ENCODE measurements at regions of chr2 and their contacts with region 1.

Region 1: GRCh38 chr2:128321784-128322714 is 3.4 kb upstream of the HS6ST1 start:
- DNase-seq: peak; percentile 75 to 80 (median 78)
- H3K4me3 ChIP-seq: peak overlapping the region; percentile 42 to 72 (median 51)
- H3K4me3 Mint-ChIP-seq: peak overlapping the region; percentile 77 to 78
- H3K27ac ChIP-seq: peak overlapping the region in 1 of 2 donors; percentile 83
- H3K27ac Mint-ChIP-seq: peak overlapping the region in 6 of 7 donors; percentile 51 to 86 (median 74)
- H3K4me1 ChIP-seq: peaks cover 22 to 28% of the 10 kb centered on the region in 2 donors
- H3K4me1 Mint-ChIP-seq: peaks cover 19% of the 10 kb centered on the region
- H3K27me3 ChIP-seq: peaks cover 0 to 16% of the 10 kb centered on the region in 2 donors
- H3K27me3 Mint-ChIP-seq: peaks cover 8 to 42% (median 12%) of the 10 kb centered on the region in 3 donors
- CTCF ChIP-seq: peak; percentile 95

Region 2: DNA sequence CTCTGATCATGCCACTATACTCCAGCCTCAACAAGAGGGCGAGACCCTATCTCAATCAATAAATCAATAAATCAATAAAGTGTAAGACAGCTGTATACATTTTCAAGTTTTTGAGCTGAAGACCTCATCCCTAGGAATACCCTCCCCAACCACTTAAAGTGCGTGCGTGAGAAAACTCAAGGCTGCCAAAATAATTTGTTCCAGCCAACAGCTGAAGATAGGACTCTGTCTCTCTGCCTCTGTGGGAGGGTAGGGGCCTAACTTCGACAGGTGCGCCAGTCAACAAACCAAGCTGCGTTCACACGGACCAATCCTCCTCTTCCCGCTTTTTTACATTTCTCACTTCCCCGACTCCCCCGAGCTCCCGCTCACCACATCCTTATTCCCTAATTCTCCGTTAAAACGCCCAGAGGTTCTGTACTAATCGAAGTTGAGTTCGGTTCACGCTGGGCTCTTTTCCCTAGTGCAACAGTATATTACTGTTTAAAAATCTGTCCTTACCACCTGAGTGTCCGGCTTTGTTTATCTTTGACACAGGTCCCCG is 464.7 kb before region 1 on chr2:
- intact Hi-C with region 1: no loop called
- DNase-seq: peak in 1 of 3 donors; percentile 11
- H3K4me3 ChIP-seq: peak overlapping the region; percentile 79 to 85 (median 83)
- H3K4me3 Mint-ChIP-seq: peak overlapping the region; percentile 82 to 95
- H3K27ac ChIP-seq: peak overlapping the region; percentile 34 to 87
- H3K27ac Mint-ChIP-seq: peak overlapping the region; percentile 84 to 92 (median 88)
- H3K4me1 ChIP-seq: peaks cover 18 to 32% of the 10 kb centered on the region in 2 donors
- H3K4me1 Mint-ChIP-seq: peaks cover 37% of the 10 kb centered on the region
- H3K27me3 ChIP-seq: no peaks in the 10 kb centered on the region
- H3K27me3 Mint-ChIP-seq: peaks cover 3 to 5% (median 4%) of the 10 kb centered on the region in 3 donors
- CTCF ChIP-seq: no peak

Region 3: DNA sequence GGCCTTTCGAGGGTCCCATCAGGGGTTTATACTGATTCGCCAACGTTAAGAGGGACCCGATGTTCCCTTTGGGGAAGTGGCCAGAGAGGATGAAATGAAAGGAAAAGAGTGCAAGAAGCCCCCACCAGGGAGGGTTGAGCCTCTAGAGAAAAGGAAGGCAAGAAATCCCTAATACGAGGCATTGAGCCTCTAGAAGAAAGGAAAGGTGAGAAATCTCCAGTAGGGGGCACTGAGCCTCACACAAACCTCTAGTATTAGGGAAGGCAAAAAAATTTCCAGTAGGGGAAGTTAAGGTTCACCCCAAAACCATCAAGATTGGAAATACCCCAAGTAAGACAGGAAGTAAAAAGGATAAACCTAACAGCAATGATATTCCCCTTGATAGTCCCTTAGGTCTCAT is 284.4 kb before region 1 on chr2:
- intact Hi-C with region 1: no loop called
- DNase-seq: peak in 1 of 3 donors; percentile 17
- H3K4me3 ChIP-seq: peak overlapping the region in 1 of 3 experiments; percentile 12
- H3K4me3 Mint-ChIP-seq: no peak overlapping the region
- H3K27ac ChIP-seq: no peak overlapping the region
- H3K27ac Mint-ChIP-seq: no peak overlapping the region
- H3K4me1 ChIP-seq: no peaks in the 10 kb centered on the region
- H3K4me1 Mint-ChIP-seq: no peaks in the 10 kb centered on the region
- H3K27me3 ChIP-seq: no peaks in the 10 kb centered on the region
- H3K27me3 Mint-ChIP-seq: peaks cover 3 to 5% (median 4%) of the 10 kb centered on the region in 3 donors
- CTCF ChIP-seq: no peak

Region 4: DNA sequence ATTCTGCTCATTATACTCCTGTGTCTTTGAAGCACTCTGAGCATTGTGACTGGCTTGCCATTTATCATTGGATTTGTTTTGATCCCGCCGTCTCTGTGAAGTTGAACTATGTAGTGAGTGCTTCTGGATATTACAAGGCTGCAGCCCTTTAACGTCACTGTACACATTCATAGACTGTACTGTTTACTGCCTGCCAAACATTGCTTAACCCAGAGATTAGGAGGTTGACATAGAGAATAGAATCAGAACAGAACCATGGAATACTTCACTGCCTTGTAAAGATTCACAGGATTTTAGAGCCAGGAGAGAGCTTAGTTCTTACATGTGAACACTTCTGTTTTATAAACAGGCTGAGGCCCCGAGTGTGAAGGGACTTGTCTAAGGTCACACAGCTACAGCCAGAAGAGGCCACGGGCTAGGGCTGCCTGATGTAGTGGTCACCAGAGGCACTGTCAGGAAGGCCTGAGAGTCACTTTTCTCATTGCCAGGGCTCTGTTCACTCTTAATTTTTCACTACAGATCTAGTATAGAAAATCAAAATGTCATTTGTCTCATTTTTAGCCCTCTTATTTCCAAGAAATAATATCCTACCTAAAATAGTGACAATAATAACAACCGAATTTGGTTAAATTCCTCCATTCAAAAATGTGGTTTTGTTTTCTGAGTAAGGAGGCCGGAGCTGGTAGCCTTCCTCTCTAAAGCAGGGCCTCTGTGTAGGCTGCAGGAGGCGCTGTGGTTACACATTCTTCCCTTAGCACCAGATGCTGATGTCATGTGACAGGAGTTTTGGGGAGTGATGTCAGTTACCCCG is 143.2 kb before region 1 on chr2:
- intact Hi-C with region 1: loop called in 1 of 2 experiments (anchors 10 kb)
- DNase-seq: peak; percentile 63 to 80 (median 76)
- H3K4me3 ChIP-seq: no peak overlapping the region
- H3K4me3 Mint-ChIP-seq: no peak overlapping the region
- H3K27ac ChIP-seq: peak overlapping the region; percentile 18 to 24
- H3K27ac Mint-ChIP-seq: peak overlapping the region in 5 of 7 donors; percentile 28 to 74 (median 46)
- H3K4me1 ChIP-seq: no peaks in the 10 kb centered on the region
- H3K4me1 Mint-ChIP-seq: peaks cover 3% of the 10 kb centered on the region
- H3K27me3 ChIP-seq: no peaks in the 10 kb centered on the region
- H3K27me3 Mint-ChIP-seq: no peaks in the 10 kb centered on the region
- CTCF ChIP-seq: peak; percentile 80

Region 5: GRCh38 chr2:128503804-128504652 is 182.0 kb after region 1 on chr2:
- intact Hi-C with region 1: loop called in 1 of 2 experiments (anchors 10 kb)
- DNase-seq: no peak
- H3K4me3 ChIP-seq: no peak overlapping the region
- H3K4me3 Mint-ChIP-seq: no peak overlapping the region
- H3K27ac ChIP-seq: no peak overlapping the region
- H3K27ac Mint-ChIP-seq: no peak overlapping the region
- H3K4me1 ChIP-seq: no peaks in the 10 kb centered on the region
- H3K4me1 Mint-ChIP-seq: peaks cover 10% of the 10 kb centered on the region
- H3K27me3 ChIP-seq: no peaks in the 10 kb centered on the region
- H3K27me3 Mint-ChIP-seq: peaks cover 3 to 5% (median 5%) of the 10 kb centered on the region in 3 donors
- CTCF ChIP-seq: no peak

Region 6: DNA sequence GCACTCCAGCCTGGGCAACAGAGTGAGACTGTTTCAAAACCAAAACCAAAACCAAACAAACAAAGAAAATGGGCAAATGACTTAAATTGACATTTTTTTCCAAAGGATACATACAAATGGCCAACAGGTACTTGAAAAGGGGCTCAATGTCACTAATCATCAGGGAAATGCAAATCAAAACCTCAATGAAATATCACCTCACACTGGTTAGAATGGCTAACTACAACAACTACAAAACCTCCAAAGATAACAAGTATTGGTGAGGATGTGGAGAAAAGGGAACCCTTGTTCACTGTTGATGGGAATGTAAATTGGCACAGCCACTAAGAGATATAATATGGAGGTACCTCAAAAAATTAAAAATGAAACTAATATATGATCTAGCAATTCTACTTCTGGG is 209.8 kb after region 1 on chr2:
- intact Hi-C with region 1: loop called in 1 of 2 experiments (anchors 5 kb)
- DNase-seq: peak in 1 of 3 donors; percentile 18
- H3K4me3 ChIP-seq: no peak overlapping the region
- H3K4me3 Mint-ChIP-seq: no peak overlapping the region
- H3K27ac ChIP-seq: no peak overlapping the region
- H3K27ac Mint-ChIP-seq: peak overlapping the region in 1 of 7 donors; percentile 16
- H3K4me1 ChIP-seq: no peaks in the 10 kb centered on the region
- H3K4me1 Mint-ChIP-seq: peaks cover 12% of the 10 kb centered on the region
- H3K27me3 ChIP-seq: no peaks in the 10 kb centered on the region
- H3K27me3 Mint-ChIP-seq: peaks cover 0 to 6% (median 1%) of the 10 kb centered on the region in 3 donors
- CTCF ChIP-seq: peak; percentile 25

Region 7: DNA sequence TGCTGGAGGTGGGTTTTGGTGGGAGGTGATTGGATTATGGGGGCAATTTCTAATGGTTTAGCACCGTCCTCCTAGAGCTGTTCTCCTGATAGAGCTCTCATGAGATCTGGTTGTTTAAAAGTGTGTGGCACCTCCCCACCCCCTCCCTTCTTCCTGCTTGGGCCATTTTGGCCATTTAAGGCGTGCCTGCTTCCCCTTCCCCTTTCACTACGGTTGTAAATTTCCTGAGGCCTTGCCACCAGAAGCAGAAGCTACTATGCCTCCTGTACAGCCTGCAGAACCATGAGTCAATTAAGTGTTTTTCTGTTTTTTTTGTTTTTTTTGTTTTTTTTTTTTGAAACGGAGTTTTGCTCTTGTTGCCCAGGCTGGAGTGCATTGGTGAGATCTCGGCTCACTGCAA is 332.4 kb after region 1 on chr2:
- intact Hi-C with region 1: loop called in 1 of 2 experiments (anchors 10 kb)
- DNase-seq: peak; percentile 87 to 90 (median 89)
- H3K4me3 ChIP-seq: peak overlapping the region in 1 of 3 experiments; percentile 47
- H3K4me3 Mint-ChIP-seq: peak overlapping the region; percentile 40 to 57
- H3K27ac ChIP-seq: peak overlapping the region; percentile 60 to 83
- H3K27ac Mint-ChIP-seq: peak overlapping the region; percentile 88 to 95 (median 92)
- H3K4me1 ChIP-seq: peaks cover 23 to 36% of the 10 kb centered on the region in 2 donors
- H3K4me1 Mint-ChIP-seq: peaks cover 45% of the 10 kb centered on the region
- H3K27me3 ChIP-seq: no peaks in the 10 kb centered on the region
- H3K27me3 Mint-ChIP-seq: peaks cover 0 to 2% (median 0%) of the 10 kb centered on the region in 3 donors
- CTCF ChIP-seq: no peak

Region 8: DNA sequence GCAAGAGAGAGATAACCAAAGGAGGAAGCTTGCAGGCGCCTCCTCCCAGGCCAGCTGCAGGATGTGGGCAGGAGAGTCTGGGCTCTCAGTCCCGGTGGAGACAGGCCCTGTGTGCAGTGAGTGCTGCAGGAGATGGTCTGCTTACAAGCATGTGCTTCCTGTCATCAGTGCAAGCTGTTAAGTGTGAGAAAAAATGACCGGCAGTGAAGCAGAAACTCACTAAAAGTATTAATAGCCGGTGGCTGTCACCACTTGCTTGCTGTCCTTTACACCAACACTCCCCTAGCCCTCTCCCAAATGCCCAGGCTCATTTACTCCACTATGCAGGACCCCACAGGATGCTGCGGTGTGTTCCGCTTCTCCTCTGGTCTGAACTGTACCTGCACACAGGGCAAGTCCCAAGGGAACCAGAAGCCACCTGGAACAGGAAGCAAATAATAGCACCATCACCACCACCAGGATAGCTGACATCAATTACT is 432.2 kb after region 1 on chr2:
- intact Hi-C with region 1: loop called (anchors 10 kb)
- DNase-seq: no peak
- H3K4me3 ChIP-seq: no peak overlapping the region
- H3K4me3 Mint-ChIP-seq: no peak overlapping the region
- H3K27ac ChIP-seq: no peak overlapping the region
- H3K27ac Mint-ChIP-seq: peak overlapping the region in 1 of 7 donors; percentile 58
- H3K4me1 ChIP-seq: peaks cover 4 to 8% of the 10 kb centered on the region in 2 donors
- H3K4me1 Mint-ChIP-seq: peaks cover 18% of the 10 kb centered on the region
- H3K27me3 ChIP-seq: no peaks in the 10 kb centered on the region
- H3K27me3 Mint-ChIP-seq: peaks cover 8 to 10% (median 8%) of the 10 kb centered on the region in 3 donors
- CTCF ChIP-seq: no peak

Measured in CD14-positive monocyte (primary cell).